Dendritic cell treated with granulocyte-macrophage colony-stimulating factor and Interleukin-4, amounts not matched to agents 40 ng/mL and 50 ng/mL, for 4 days (primary cell): ENCODE measurements at regions of chr2 and their contacts with region 1.

Region 1: DNA sequence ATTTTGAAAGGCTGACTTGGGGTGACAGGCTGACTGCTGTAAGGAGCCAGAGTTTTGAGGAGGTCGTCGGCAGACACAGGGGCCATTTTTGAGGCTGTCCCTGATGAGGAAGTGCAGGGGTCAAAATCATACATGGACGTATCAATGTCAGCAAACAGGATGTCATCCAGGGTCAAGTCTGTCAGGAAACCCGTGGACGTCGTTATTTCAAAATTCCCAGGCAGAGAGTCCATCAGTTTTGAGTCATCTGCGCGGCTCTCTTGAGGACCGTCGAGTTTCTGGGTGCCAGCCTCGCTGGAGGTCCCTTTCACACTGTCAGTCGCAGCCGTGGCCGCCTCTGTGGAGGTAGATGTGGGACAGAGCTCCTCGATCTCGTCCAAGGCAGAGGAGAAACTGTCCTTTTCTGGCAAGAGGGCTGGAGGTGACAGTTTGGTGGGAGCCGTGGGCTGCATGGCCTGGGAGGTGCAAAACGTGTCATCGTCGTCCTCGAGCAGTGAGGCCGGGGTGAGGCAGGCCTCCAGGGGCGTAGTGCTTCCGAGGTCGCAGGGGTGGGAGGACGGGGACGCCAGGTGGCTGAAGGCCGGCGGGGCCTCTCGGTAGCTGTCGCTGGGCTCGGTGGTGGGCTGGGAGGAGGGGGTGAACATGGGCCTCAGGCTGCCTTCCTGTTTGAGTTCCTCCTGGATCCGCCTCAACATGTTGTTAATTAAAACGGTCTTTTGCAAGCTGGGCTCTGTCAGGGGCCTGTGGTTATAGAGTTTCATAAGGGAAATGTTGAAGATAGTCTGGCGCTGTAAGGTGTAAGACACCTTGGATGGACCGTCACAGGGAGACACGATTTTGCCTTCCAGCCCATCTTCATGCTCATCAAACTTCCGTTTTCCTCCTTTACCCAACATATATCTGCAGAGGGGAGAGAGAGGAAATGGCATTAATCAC is 17.5 kb downstream of the SERTAD2 start:
- H3K4me3 Mint-ChIP-seq: no peak overlapping the region
- H3K27ac Mint-ChIP-seq: peak overlapping the region; percentile 5
- H3K4me1 Mint-ChIP-seq: peaks cover 52% of the 10 kb centered on the region
- H3K27me3 Mint-ChIP-seq: no peaks in the 10 kb centered on the region

Region 2: DNA sequence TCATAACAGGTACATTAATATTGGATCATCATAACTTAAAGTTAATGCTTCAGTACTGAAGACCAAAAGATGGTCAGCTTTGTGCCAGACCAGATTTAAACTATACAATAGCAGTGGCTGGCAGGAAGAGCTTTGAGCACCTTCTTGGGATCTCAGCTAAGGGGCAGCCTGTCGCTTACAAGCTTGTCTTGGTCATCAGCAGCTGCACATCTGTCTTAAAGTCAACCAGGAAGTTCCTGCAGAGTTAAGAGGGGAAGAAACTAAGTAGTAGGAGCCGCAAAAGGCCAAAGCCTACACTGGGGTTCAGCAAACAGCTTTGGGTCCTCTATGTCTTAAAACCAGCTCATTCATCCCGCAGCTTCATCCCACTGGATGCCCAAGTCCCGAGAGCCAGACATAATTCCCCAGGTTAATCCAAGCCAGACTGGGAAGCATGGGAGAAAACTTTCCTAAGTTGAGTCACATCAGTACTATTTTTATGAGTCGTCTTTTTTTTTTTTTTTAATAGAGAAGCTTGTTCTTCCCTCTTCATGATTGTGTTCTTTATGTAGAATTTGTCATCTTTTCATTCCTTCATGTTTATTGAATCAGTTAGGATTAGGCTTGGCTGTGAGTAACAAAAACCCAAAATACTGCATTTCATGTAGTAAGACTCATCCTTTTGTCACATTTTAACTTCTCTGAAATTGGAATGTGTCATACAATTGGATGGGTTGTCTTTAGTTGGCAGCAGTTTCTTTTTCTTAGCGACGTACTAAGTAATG is 41.8 kb before region 1 on chr2:
- intact Hi-C with region 1: loop called (anchors 5 kb)
- H3K4me3 Mint-ChIP-seq: no peak overlapping the region
- H3K27ac Mint-ChIP-seq: peak overlapping the region; percentile 50
- H3K4me1 Mint-ChIP-seq: peaks cover 18% of the 10 kb centered on the region
- H3K27me3 Mint-ChIP-seq: no peaks in the 10 kb centered on the region

Region 3: DNA sequence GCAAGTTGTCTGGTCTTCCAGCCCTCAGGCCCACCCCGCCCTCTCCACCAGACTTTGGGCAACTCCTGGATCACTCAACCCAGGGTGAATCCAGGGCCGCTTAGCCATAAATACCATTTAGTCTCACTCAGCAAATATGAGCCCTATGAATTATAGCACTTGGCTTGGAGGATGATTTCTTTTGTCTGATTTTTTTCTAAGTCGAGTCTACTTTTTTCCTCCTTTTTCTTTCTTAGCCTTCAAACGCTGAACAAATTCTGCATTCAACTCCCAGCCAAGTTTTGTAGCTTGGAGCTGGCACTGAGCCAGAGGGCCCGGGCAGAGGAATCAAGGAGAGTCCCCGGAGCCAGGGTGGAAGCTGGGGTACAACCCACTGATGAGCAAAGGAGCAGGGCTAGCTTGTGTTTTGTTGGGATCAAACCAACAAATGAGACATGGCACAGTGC is 31.2 kb before region 1 on chr2:
- intact Hi-C with region 1: no loop called
- H3K4me3 Mint-ChIP-seq: no peak overlapping the region
- H3K27ac Mint-ChIP-seq: no peak overlapping the region
- H3K4me1 Mint-ChIP-seq: peaks cover 28% of the 10 kb centered on the region
- H3K27me3 Mint-ChIP-seq: peaks cover 5% of the 10 kb centered on the region

Region 4: GRCh38 chr2:66334237-66335054 is 1698.2 kb after region 1 on chr2:
- intact Hi-C with region 1: no loop called
- H3K4me3 Mint-ChIP-seq: no peak overlapping the region
- H3K27ac Mint-ChIP-seq: no peak overlapping the region
- H3K4me1 Mint-ChIP-seq: no peaks in the 10 kb centered on the region
- H3K27me3 Mint-ChIP-seq: no peaks in the 10 kb centered on the region